ENCODE measurements at regions of chr11 and their contacts with region 1.

Region 1: DNA sequence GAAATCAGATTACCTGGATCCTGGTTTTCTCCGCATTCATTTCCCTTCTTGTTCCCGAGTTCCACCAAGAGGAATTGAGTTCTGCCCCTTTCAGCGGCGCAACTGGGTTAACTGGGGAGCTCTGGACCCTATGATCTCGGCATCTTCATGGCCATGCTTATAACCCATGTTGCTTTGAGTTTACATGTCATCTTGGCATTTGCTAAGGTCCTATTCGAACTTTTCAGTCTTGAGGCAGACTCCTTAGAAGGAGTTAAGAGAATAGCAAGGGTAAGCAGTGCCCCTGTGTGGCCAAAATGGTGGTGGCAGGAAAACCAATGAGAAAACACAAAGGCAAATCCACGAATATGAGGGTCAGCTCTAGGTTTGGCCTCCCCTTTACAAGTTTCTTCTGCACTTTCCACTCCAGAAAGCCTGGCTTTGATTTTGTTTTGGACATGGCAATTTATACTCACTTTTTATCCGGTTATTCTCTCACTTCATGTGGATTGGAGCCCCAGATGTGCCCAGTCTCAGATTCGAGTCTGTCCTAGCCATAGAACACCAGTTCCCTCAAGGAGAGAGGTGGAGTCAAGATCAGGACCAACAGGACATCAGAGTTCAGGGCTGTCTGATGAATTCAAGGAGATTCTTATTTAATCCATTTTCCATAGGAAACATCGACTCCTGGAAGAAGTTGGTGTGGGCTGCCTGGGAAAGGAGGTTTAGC is 55.3 kb upstream of the FBXO3 start:
- DNase-seq: peak; percentile 67
- ATAC-seq: peak; percentile 95
- H3K4me3 ChIP-seq: peak overlapping the region; percentile 44 to 73
- H3K27ac ChIP-seq: no peak overlapping the region
- H3K4me1 ChIP-seq: no peaks in the 10 kb centered on the region
- H3K27me3 ChIP-seq: 0 out of 2 replicates have a peak, but pooled peaks cover 2% of the 10 kb centered on the region
- CTCF ChIP-seq: peak; percentile 93

Region 2: GRCh38 chr11:33376331-33377310 is 453.0 kb before region 1 on chr11:
- CTCF ChIA-PET with region 1: no interaction called
- POLR2A ChIA-PET with region 1: no interaction called
- in situ Hi-C with region 1: no loop called
- intact Hi-C with region 1: loop called (anchors 10 kb)
- DNase-seq: no peak
- ATAC-seq: peak; percentile 69
- H3K4me3 ChIP-seq: peak overlapping the region; percentile 58 to 69
- H3K27ac ChIP-seq: peak overlapping the region; percentile 58; the same call in 1 of the 2 replicates
- H3K4me1 ChIP-seq: peaks cover 21% of the 10 kb centered on the region
- H3K27me3 ChIP-seq: no peaks in the 10 kb centered on the region
- CTCF ChIP-seq: no peak

Region 3: GRCh38 chr11:33668468-33668825 is 161.1 kb before region 1 on chr11:
- CTCF ChIA-PET with region 1: no interaction called
- POLR2A ChIA-PET with region 1: no interaction called
- in situ Hi-C with region 1: no loop called
- intact Hi-C with region 1: no loop called
- DNase-seq: no peak
- ATAC-seq: no peak
- H3K4me3 ChIP-seq: no peak overlapping the region
- H3K27ac ChIP-seq: no peak overlapping the region
- H3K4me1 ChIP-seq: no peaks in the 10 kb centered on the region
- H3K27me3 ChIP-seq: no peaks in the 10 kb centered on the region
- CTCF ChIP-seq: no peak

Region 4: DNA sequence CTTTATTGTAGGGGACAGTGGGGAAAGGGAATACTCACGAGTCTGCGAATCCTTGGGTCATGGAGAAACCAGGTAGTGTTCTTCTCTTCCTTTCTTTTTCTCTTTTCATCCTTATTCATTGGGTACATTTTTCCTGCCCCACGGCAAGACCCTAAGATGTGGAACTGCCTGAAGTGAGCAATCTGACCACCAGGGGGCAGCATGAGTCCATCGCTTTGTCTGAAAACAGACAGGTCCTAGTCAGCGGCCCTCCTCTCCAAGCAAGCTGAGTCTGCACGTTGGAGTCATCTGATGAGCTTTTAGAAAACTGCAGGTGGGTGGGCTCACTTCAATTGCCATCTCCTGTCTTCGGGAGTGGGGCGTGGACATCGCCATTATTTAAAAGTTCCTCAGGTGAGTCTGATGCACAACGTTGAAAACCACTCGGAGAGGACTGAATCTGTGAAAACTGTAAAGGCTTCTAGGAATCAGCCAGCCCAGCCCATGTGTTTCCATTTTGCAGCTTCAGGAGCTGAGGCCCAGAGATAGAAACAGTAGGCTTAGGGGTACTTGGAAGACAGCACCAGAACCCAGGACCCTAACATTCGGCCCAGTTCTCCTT is 21.3 kb before region 1 on chr11:
- CTCF ChIA-PET with region 1: interaction called, 22 read pairs
- POLR2A ChIA-PET with region 1: no interaction called
- in situ Hi-C with region 1: no loop called
- intact Hi-C with region 1: loop called (anchors 1 kb)
- DNase-seq: no peak
- ATAC-seq: peak; percentile 97
- H3K4me3 ChIP-seq: no peak overlapping the region
- H3K27ac ChIP-seq: no peak overlapping the region
- H3K4me1 ChIP-seq: no peaks in the 10 kb centered on the region
- H3K27me3 ChIP-seq: no peaks in the 10 kb centered on the region
- CTCF ChIP-seq: peak; percentile 93

Measured in Panc1 (cell line).